ENCODE measurements at regions of chr11 and their contacts with region 1.

Region 1: GRCh38 chr11:6443269-6444003 is 2.6 kb upstream of the HPX start:
- DNase-seq: peak; percentile 72
- ATAC-seq: peak; percentile 92
- H3K4me3 ChIP-seq: no peak overlapping the region
- H3K4me3 Mint-ChIP-seq: no peak overlapping the region
- H3K27ac ChIP-seq: no peak overlapping the region
- H3K27ac Mint-ChIP-seq: no peak overlapping the region
- H3K4me1 ChIP-seq: peaks cover 0 to 4% of the 10 kb centered on the region in 2 donors
- H3K4me1 Mint-ChIP-seq: no peaks in the 10 kb centered on the region
- H3K27me3 ChIP-seq: no peaks in the 10 kb centered on the region
- H3K27me3 Mint-ChIP-seq: no peaks in the 10 kb centered on the region
- CTCF ChIP-seq: peak; percentile 92

Region 2: DNA sequence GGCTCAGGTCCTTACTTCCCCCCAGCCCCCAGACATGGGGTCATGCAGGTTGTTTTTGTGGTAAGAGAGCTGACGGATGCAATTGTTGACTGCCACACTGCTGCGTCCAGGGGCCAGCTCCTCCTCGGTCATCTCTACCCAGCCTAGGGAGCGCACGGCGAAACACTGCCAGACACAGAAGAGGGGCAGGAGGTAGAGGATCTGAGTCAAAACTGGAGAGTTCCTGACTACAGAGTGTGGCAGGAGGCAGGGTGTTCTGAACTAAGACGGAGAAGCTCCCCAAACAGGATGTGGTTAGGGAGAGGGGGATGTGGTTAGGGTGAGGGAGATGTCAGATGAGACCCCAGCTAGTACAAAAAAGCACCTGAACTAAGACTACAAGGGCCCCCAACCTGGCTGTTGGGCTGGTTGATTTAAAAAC is 40.9 kb before region 1 on chr11:
- CTCF ChIA-PET with region 1: interaction called, 12 read pairs
- POLR2A ChIA-PET with region 1: no interaction called
- intact Hi-C with region 1: no loop called
- DNase-seq: peak; percentile 81
- ATAC-seq: peak; percentile 83
- H3K4me3 ChIP-seq: peak overlapping the region in 4 of 5 experiments; percentile 10 to 51 (median 34)
- H3K4me3 Mint-ChIP-seq: peak overlapping the region; percentile 80
- H3K27ac ChIP-seq: peak overlapping the region; percentile 60 to 62
- H3K27ac Mint-ChIP-seq: peak overlapping the region; percentile 90
- H3K4me1 ChIP-seq: peaks cover 39 to 43% of the 10 kb centered on the region in 2 donors
- H3K4me1 Mint-ChIP-seq: peaks cover 59% of the 10 kb centered on the region
- H3K27me3 ChIP-seq: no peaks in the 10 kb centered on the region
- H3K27me3 Mint-ChIP-seq: no peaks in the 10 kb centered on the region
- CTCF ChIP-seq: no peak

Region 3: DNA sequence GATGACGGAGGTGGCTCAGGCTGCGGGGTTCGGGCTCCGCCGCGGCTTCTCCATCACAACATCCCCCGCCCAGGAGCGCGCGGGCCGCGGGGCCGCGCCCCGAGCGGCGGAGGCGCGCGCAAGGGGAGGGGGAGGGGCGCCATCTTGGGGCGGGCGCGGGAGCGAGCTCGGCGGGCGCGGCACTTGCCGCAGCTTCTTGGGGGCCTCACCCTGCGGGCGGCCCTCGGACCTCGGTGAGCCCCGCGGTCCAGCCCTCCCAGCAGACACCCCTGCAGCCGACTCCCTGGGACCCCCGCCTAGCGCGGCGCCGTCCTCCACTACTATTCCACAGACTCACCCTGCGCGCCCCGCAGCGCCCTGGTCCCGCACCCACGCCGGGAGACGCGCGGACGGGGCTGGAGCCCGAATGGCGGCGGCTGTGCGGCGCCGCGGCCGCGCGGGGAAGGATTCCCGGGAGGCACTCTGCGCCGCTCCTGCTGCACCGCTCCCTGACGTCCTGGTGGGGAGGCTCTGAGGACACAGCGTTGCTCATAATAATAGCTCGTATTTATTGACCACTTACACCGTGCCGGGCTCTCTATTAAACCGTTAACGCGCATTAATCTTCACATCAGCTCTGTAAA is 24.3 kb before region 1 on chr11 and contains the start of gene APBB1:
- CTCF ChIA-PET with region 1: interaction called, 29 read pairs
- POLR2A ChIA-PET with region 1: no interaction called
- intact Hi-C with region 1: no loop called
- DNase-seq: peak; percentile 87
- ATAC-seq: peak; percentile 83
- H3K4me3 ChIP-seq: peak within 1 kb of the TSS; percentile 27 to 85 (median 71)
- H3K4me3 Mint-ChIP-seq: peak within 1 kb of the TSS; percentile 85
- H3K27ac ChIP-seq: peak within 1 kb of the TSS; percentile 5 to 66
- H3K27ac Mint-ChIP-seq: peak within 1 kb of the TSS; percentile 76
- H3K4me1 ChIP-seq: peaks cover 29 to 32% of the 10 kb centered on the region in 2 donors
- H3K4me1 Mint-ChIP-seq: peaks cover 7% of the 10 kb centered on the region
- H3K27me3 ChIP-seq: peaks cover 0 to 8% (median 7%) of the 10 kb centered on the region in 4 experiments
- H3K27me3 Mint-ChIP-seq: peaks cover 28% of the 10 kb centered on the region
- CTCF ChIP-seq: peak; percentile 17
- total RNA-seq, gene APBB1: 31.4 and 32.5 TPM in 2 replicates

Region 4: GRCh38 chr11:6431861-6432260 is 11.6 kb before region 1 on chr11:
- CTCF ChIA-PET with region 1: interaction called, 12 read pairs
- POLR2A ChIA-PET with region 1: no interaction called
- intact Hi-C with region 1: no loop called
- DNase-seq: no peak
- ATAC-seq: no peak
- H3K4me3 ChIP-seq: no peak overlapping the region
- H3K4me3 Mint-ChIP-seq: no peak overlapping the region
- H3K27ac ChIP-seq: no peak overlapping the region
- H3K27ac Mint-ChIP-seq: no peak overlapping the region
- H3K4me1 ChIP-seq: peaks cover 7 to 11% of the 10 kb centered on the region in 2 donors
- H3K4me1 Mint-ChIP-seq: peaks cover 12% of the 10 kb centered on the region
- H3K27me3 ChIP-seq: no peaks in the 10 kb centered on the region
- H3K27me3 Mint-ChIP-seq: no peaks in the 10 kb centered on the region
- CTCF ChIP-seq: no peak

Region 5: DNA sequence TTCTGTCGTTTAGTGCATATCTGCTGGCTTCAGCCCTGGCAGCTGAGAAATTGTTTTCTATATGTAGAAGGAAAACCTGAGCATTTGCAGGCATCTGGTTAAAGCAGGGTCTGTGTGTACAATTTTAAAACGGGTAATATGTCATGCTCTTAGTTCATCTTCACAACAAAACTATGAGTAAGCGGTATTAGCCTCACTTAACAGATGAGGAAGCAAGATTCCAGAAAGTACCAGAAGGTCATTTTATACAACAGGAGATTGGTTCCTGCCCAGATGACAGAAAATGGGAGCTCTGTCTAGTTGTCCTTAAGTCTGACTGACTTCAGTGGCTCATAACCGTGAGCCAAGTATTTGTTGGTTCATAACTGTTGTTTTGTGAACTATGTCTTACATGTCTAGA is 39.0 kb after region 1 on chr11:
- CTCF ChIA-PET with region 1: no interaction called
- POLR2A ChIA-PET with region 1: no interaction called
- intact Hi-C with region 1: no loop called
- DNase-seq: no peak
- ATAC-seq: no peak
- H3K4me3 ChIP-seq: peak overlapping the region in 3 of 5 experiments; percentile 83 to 92 (median 85)
- H3K4me3 Mint-ChIP-seq: peak overlapping the region; percentile 97
- H3K27ac ChIP-seq: peak overlapping the region; percentile 90 to 96
- H3K27ac Mint-ChIP-seq: peak overlapping the region; percentile 97
- H3K4me1 ChIP-seq: peaks cover 20 to 27% of the 10 kb centered on the region in 2 donors
- H3K4me1 Mint-ChIP-seq: peaks cover 39% of the 10 kb centered on the region
- H3K27me3 ChIP-seq: no peaks in the 10 kb centered on the region
- H3K27me3 Mint-ChIP-seq: no peaks in the 10 kb centered on the region
- CTCF ChIP-seq: no peak

Region 6: DNA sequence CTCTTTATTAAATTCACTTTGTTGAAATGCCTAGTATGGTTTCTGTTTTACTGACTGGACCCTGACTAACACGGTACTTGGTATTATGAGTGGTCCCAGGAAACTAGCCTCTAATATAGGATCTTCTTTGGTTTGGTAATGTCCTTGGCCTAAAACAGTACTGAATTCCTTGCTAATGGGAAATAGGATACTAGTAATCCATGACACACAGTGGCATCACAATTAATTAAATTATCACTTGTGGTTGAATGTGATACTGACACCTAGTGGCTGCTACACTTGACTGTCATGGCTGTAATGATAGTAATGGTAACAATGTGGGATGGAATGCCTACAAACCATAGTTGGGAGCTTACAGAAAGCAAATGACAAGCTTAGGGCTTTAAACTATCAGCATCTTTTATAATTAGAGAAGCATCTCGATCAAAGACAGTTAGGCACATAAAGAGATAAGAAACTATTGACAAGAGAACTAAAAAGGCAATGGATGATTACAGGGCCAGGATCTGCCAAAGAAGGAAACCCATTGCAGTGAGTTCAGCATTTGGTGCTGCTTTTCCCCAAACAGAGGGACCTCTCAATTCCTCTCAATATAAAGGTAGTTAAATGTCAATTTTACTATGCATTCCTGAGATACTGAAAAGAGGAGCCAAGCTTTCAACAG is 62.3 kb after region 1 on chr11:
- CTCF ChIA-PET with region 1: interaction called, 5 read pairs
- POLR2A ChIA-PET with region 1: no interaction called
- intact Hi-C with region 1: loop called (anchors 2 kb)
- DNase-seq: peak; percentile 53
- ATAC-seq: peak; percentile 33
- H3K4me3 ChIP-seq: no peak overlapping the region
- H3K4me3 Mint-ChIP-seq: no peak overlapping the region
- H3K27ac ChIP-seq: no peak overlapping the region
- H3K27ac Mint-ChIP-seq: no peak overlapping the region
- H3K4me1 ChIP-seq: no peaks in the 10 kb centered on the region
- H3K4me1 Mint-ChIP-seq: no peaks in the 10 kb centered on the region
- H3K27me3 ChIP-seq: no peaks in the 10 kb centered on the region
- H3K27me3 Mint-ChIP-seq: no peaks in the 10 kb centered on the region
- CTCF ChIP-seq: peak; percentile 76

Measured in B cell (primary cell).